ENCODE measurements at regions of chr4 and their contacts with region 1.

Region 1: GRCh38 chr4:56907489-56908205 is at the start of gene REST:
- DNase-seq: peak; percentile 80
- H3K4me3 Mint-ChIP-seq: peak within 1 kb of the TSS; percentile 88
- H3K27ac Mint-ChIP-seq: peak within 1 kb of the TSS; percentile 55
- H3K4me1 Mint-ChIP-seq: peaks cover 41% of the 10 kb centered on the region
- H3K27me3 Mint-ChIP-seq: no peaks in the 10 kb centered on the region
- total RNA-seq, gene REST: 46.1 to 47.0 TPM

Region 2: DNA sequence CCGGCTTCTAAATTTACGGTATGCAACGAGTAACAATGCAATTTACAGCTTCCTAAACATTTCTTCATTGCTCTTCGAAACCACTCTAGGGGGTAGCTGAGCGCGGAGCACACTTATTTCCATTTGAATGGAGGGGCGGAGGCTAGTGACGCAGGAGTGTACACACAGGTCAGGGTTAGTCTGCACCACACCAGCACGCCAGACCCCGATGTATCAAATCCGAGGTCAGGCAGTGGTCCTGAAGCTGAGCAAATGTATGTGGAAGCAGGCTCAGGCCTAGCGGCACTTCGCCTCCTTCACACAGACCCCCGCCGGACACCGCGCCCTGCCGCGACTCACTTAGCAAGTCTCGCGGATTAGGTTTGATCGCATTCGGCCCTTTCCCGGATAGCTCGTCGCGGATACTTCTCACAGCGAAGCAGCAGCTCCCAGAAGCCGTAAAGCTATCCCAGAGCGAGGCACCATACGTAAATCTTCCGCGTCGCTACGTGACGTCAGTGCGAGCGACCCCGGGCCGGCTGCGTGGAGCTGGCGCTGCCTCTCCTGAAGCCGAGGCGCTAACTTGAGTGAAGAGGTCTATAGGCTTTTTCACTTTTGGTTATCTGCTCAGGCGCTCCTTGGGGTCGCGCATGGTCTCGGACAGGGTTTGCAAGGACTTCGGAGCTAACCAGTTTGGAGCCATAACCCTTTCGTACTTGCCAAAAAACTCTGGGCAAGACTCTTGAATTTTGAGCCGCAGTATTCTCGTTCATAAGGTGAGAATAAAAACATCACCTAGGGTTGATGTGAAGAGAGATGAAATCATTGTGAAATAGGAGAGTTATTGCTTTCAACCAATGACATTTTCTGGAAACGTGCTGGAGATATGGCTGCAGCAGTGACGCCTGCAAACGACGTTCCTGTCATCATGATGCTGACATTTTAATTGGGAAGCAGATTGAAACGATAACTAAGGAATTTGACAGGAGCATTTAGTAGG is 520.3 kb before region 1 on chr4 and contains the start of gene AASDH:
- CTCF ChIA-PET with region 1: no interaction called
- POLR2A ChIA-PET with region 1: interaction called, 5 read pairs
- intact Hi-C with region 1: loop called (anchors 5 kb)
- DNase-seq: peak; percentile 97
- H3K4me3 Mint-ChIP-seq: peak within 1 kb of the TSS; percentile 93
- H3K27ac Mint-ChIP-seq: peak within 1 kb of the TSS; percentile 99
- H3K4me1 Mint-ChIP-seq: peaks cover 30% of the 10 kb centered on the region
- H3K27me3 Mint-ChIP-seq: no peaks in the 10 kb centered on the region
- total RNA-seq, gene AASDH: 12.0 to 16.6 TPM